ENCODE measurements at regions of chr2 and their contacts with region 1.

Region 1: GRCh38 chr2:148524519-148524919 is 120.0 kb upstream of the EPC2 start:
- DNase-seq: peak; percentile 89
- H3K4me3 Mint-ChIP-seq: peak overlapping the region; percentile 44
- H3K27ac Mint-ChIP-seq: peak overlapping the region; percentile 94
- H3K4me1 Mint-ChIP-seq: peaks cover 67% of the 10 kb centered on the region
- H3K27me3 Mint-ChIP-seq: no peaks in the 10 kb centered on the region

Region 2: GRCh38 chr2:147297820-147298219 is 1226.7 kb before region 1 on chr2:
- intact Hi-C with region 1: loop called (anchors 10 kb)
- DNase-seq: peak; percentile 85
- H3K4me3 Mint-ChIP-seq: peak overlapping the region; percentile 34
- H3K27ac Mint-ChIP-seq: peak overlapping the region; percentile 83
- H3K4me1 Mint-ChIP-seq: peaks cover 52% of the 10 kb centered on the region
- H3K27me3 Mint-ChIP-seq: no peaks in the 10 kb centered on the region

Region 3: GRCh38 chr2:147843864-147844696 is 680.4 kb before region 1 on chr2:
- intact Hi-C with region 1: loop called (anchors 10 kb)
- DNase-seq: peak; percentile 96
- H3K4me3 Mint-ChIP-seq: peak overlapping the region; percentile 93
- H3K27ac Mint-ChIP-seq: peak overlapping the region; percentile 88
- H3K4me1 Mint-ChIP-seq: peaks cover 26% of the 10 kb centered on the region
- H3K27me3 Mint-ChIP-seq: peaks cover 54% of the 10 kb centered on the region

Region 4: DNA sequence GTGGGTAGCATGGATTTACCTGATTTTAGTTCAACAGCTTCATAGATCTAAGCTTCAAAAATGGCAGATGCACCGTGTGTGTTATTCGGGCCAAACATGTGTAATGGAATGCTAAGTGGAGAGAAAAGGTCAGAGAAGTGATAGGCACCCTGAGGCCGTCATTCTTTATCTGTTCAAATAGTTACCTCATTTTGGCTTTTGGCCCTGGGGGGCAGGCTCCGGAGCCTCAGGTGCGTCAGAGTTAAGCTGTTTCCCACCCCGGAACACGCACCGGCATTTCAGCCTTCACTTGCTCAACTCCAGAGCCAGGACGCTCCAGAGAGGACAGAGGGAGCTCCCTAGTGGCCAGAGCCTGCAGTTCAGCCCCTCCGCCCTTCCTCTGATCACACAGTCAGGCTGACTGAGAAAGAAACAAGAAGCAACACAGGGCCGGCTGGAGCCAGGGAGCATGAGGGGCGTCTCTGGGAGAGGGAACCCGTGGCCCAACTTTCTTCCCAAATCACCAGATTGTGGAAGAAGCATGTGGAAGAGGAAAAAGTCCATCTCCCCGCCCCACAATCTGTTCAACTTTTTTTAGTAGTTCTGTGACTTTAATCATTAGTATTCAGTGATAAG is 15.1 kb before region 1 on chr2:
- intact Hi-C with region 1: loop called (anchors 1 kb)
- DNase-seq: peak; percentile 95
- H3K4me3 Mint-ChIP-seq: peak overlapping the region; percentile 73
- H3K27ac Mint-ChIP-seq: peak overlapping the region; percentile 66
- H3K4me1 Mint-ChIP-seq: peaks cover 31% of the 10 kb centered on the region
- H3K27me3 Mint-ChIP-seq: no peaks in the 10 kb centered on the region

Region 5: DNA sequence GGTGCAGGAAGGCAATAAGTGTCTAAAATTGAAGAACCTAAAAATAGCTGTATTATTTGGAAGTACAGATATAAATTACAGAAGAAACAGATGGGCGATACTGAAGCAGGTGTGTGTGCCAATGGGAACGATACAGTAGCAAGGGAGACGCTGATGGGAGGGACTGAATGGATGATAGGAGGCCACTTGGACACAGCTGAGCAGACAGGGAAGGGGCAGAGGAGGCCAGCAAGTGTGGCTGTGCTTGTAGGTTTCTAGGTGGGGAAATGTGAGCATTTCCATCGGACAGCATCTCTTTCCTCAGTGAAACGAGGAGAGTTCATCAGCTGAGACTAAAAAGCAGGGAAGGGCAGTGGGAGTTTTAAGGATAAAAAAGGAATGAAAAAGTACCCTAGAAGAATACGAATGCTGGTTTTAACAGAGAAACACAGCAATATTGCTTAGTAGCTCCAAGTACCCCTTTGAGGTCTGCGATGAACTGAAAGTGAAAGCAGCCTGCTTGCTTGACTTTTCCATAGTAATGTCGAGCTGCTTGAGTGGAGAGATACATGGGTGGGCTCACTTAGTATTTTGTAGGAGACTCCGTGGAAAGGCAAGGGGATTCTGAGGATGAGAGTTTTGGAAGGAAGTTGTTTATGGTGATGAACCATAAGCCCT is 28.3 kb after region 1 on chr2:
- intact Hi-C with region 1: loop called (anchors 2 kb)
- DNase-seq: peak; percentile 88
- H3K4me3 Mint-ChIP-seq: no peak overlapping the region
- H3K27ac Mint-ChIP-seq: no peak overlapping the region
- H3K4me1 Mint-ChIP-seq: peaks cover 6% of the 10 kb centered on the region
- H3K27me3 Mint-ChIP-seq: no peaks in the 10 kb centered on the region

Region 6: GRCh38 chr2:148578493-148578884 is 54.0 kb after region 1 on chr2:
- intact Hi-C with region 1: no loop called
- DNase-seq: no peak
- H3K4me3 Mint-ChIP-seq: no peak overlapping the region
- H3K27ac Mint-ChIP-seq: no peak overlapping the region
- H3K4me1 Mint-ChIP-seq: peaks cover 5% of the 10 kb centered on the region
- H3K27me3 Mint-ChIP-seq: peaks cover 39% of the 10 kb centered on the region

Region 7: DNA sequence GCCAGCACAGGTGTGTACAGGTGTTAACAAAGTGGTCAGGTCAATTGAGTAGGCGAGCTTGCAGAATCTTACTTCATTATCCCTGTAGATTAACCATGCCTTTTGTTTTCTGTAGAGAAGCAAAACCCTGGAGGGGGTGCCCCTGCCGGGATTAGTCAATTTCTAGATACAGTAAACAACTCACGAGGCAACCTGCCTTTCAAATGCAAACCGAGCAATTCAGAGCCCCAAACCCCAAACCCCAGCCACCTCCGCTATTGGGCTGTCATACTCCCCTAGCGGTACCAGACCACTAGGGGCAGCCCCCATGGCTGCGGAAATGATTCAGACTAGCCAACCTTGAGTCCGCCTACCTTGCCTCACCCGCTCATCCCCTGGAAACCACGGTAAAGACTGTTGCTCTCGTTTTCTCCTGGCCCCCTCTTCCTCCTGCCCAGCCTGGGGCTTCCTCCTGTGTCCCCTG is 289.1 kb after region 1 on chr2:
- intact Hi-C with region 1: loop called (anchors 5 kb)
- DNase-seq: peak; percentile 85
- H3K4me3 Mint-ChIP-seq: no peak overlapping the region
- H3K27ac Mint-ChIP-seq: peak overlapping the region; percentile 78
- H3K4me1 Mint-ChIP-seq: peaks cover 17% of the 10 kb centered on the region
- H3K27me3 Mint-ChIP-seq: peaks cover 24% of the 10 kb centered on the region